ENCODE measurements at regions of chr1 and their contacts with region 1.

Region 1: DNA sequence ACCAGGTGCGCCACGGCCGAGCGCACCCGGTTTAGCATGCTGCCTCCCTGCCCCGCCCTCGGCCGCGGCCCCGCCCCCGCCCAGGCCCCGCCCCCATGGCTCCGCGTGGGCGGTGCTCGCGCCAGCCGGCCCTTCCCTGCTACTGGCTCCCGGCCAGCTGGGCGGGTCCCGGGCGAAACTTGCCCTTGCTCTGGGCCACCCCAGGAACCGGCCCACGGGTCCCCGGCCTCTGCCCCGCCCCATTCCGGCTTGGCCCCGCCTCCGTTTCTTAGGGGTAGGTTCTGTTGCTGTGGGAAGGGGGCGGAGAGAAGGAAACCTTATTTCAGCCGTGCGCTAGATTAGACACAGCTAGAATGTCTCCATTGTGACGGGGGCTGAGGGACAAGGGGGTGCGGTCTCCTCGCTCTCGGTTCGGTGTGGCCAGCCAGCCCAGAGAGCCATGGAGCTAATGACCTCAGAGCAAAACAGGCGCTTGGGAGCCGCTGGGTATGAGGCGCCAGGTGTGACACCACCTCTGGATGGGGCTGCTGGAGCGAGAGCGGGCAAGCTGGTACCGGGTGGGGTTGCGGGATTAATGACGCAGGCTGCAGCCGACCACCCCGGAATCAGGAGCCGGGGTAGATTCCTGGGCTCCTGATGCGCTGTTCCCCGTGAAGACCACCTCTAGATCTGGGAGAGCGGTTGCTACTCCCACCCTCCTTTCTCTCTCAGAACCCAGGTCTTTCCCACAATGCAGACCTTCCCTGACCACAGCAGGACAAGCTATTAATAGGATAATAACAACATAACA is at the start of gene PPM1J:
- DNase-seq: peak; percentile 98
- H3K4me3 ChIP-seq: peak within 1 kb of the TSS; percentile 46 to 67 (median 52)
- H3K27ac ChIP-seq: peak within 1 kb of the TSS; percentile 61 to 74 (median 68)
- H3K4me1 ChIP-seq: peaks cover 0 to 35% (median 30%) of the 10 kb centered on the region in 4 donors
- H3K27me3 ChIP-seq: no peaks in the 10 kb centered on the region
- CTCF ChIP-seq: no peak
- EP300 ChIP-seq: no peak
- POLR2A ChIP-seq: no peak
- total RNA-seq, gene PPM1J: 0.36 to 1.6 (median 1.4) TPM

Region 2: GRCh38 chr1:112803906-112804762 is 88.7 kb after region 1 on chr1:
- intact Hi-C with region 1: loop called (anchors 1 kb)
- DNase-seq: no peak
- H3K4me3 ChIP-seq: no peak overlapping the region
- H3K27ac ChIP-seq: no peak overlapping the region
- H3K4me1 ChIP-seq: no peaks in the 10 kb centered on the region
- H3K27me3 ChIP-seq: no peaks in the 10 kb centered on the region
- CTCF ChIP-seq: peak in 3 of 4 experiments; percentile 11 to 54 (median 38)
- EP300 ChIP-seq: no peak
- POLR2A ChIP-seq: no peak

Region 3: DNA sequence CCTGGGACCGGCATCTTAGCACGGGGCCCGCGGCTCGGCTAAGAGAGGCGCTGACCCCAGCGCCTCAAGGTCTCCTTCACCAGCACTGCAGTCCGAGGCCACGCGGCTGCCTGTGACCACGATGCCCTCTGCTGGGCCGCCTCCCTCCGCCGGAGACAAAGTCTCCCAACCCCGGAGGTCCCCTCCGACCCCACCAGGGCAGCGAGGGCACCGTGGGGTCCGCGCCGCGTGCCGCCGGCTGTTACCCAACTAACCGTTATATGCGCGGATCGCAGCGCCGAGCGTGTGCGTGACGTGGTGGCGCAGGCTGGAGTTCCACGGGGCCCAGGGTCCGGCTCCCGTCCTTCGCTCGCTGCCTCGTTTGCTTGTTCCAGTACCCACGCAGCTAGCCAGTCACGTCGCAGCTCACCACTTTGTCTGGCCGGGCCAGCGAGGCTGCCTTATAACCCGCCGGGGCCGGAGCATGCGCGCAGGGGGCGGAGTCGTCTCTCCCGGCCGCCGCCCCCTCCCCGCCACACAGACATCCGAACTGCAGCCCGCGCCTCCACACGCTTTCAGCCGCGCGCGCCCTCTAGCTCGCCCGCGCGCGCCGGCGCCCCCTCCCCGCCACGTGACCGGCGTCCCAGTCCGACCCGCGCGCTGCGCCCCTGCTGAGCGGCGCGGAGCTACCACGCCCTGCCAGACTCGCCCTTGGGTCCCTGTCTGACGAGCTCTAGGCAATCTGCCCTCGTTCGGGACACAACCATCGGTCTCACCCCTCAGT is 240.5 kb after region 1 on chr1 and contains the start of gene SLC16A1:
- intact Hi-C with region 1: loop called (anchors 5 kb)
- DNase-seq: peak; percentile 97
- H3K4me3 ChIP-seq: peak within 1 kb of the TSS; percentile 70 to 81 (median 76)
- H3K27ac ChIP-seq: peak within 1 kb of the TSS; percentile 93 to 97 (median 96)
- H3K4me1 ChIP-seq: peaks cover 0 to 75% (median 50%) of the 10 kb centered on the region in 4 donors
- H3K27me3 ChIP-seq: no peaks in the 10 kb centered on the region
- CTCF ChIP-seq: peak in 3 of 4 experiments; percentile 11 to 22 (median 20)
- EP300 ChIP-seq: no peak
- POLR2A ChIP-seq: peak; percentile 76 to 84
- total RNA-seq, gene SLC16A1: 48.7 to 80.5 (median 68.4) TPM

Region 4: DNA sequence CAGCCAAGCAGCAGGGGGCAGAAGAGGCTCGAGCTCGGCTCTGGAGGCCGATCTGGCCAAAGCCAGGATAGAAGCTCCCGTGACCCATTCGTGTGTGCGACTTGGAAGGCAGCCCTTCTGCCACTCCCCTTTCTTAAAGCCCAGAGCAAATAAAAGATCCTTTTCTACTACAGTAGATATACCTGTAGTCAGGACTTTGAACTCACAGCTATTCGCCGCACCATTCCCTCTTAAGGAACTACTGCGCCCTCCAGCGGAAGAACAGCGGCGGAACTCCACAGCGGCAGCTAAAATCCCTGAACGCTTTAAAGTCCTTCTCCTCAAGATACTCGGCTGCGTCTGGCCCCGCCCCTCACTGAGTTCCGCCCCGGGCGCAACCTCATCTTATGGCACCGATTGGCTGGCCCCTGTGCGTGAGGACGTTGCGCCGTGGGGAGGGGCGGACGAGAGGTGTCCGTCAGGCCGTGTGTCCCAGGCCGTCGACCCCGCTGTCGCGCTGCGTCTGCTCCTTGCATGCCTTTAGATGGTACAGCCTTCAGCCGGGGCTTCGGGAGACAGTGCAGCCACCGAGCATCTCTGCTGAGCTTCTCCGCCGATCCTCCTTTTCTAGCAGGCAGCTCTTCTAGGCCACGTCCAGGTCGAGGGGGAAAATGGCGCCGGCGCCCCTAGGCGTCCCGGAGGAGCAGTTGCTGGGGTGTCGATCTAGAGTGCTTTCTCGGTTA is 357.5 kb after region 1 on chr1 and contains the start of gene LRIG2:
- intact Hi-C with region 1: loop called (anchors 2 kb)
- DNase-seq: peak; percentile 99
- H3K4me3 ChIP-seq: peak within 1 kb of the TSS; percentile 66 to 94 (median 80)
- H3K27ac ChIP-seq: peak within 1 kb of the TSS; percentile 92 to 98 (median 94)
- H3K4me1 ChIP-seq: peaks cover 0 to 39% (median 30%) of the 10 kb centered on the region in 4 donors
- H3K27me3 ChIP-seq: no peaks in the 10 kb centered on the region
- CTCF ChIP-seq: peak; percentile 80 to 95 (median 89)
- EP300 ChIP-seq: no peak
- POLR2A ChIP-seq: peak; percentile 85 to 96
- total RNA-seq, gene LRIG2: 14.1 to 24.2 (median 17.4) TPM